AG04449 (cell line): ENCODE measurements at regions of chr18 and their contacts with region 1.

Region 1: DNA sequence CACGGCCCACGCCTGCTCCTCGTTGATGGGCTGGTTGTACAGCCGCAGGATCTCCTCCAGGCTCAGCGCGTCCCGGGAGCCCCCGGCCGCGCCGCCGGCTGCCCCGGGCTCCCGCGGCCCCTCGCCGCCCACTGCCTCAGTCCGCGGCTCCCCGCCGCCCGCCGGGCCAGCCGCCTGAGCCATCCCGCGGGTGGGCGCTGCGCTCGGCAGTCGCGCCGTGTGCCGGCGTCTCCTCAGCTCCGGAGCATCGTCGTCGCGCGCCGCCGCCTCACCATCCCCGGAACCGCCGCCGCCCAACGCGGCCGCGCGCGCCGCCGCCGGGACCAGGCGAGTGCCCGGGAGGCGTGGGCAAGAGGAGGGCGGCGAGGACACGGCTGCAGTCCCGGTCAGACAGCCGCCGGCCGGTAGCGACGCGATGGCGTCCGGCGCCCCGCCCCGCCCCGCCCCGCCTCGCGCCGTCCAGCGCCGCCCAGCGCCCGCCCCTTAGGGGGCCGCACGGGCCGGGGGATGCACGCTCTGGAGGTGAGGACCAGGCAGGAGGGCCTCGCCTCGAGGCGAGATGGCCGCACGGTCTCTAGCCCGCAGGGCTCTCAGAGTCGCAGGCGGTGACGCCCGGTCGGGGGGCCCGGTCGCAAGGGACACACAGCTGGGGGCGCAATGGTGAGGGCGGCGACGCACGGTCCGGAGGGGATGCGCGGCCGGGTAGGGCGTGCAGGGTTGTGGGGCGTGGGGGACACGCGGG is at the start of gene SPIRE1:
- DNase-seq: no peak
- H3K4me3 ChIP-seq: peak within 1 kb of the TSS; percentile 81
- CTCF ChIP-seq: no peak

Region 2: GRCh38 chr18:12397254-12397653 is 260.6 kb before region 1 on chr18:
- CTCF ChIA-PET with region 1: interaction called, 336 read pairs
- POLR2A ChIA-PET with region 1: no interaction called
- DNase-seq: no peak
- H3K4me3 ChIP-seq: no peak overlapping the region
- CTCF ChIP-seq: no peak

Region 3: DNA sequence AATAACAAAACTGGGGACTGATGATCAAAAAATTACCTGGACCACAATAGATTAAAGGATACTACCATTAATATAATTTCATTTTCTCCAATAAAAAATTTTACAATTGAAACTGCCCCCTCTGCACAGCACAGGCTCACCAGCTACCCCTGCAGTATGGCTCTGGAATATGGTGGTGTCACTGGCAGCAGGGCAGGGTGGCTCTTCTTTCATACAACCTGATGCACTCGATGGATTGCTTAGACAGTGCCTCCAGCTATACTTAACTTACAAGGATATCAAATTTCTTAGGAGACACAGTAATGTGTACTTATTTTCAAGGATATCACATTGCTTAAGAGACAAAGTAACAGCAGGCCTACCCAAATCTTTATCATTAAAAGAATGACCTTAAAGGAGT is 126.1 kb before region 1 on chr18:
- CTCF ChIA-PET with region 1: interaction called, 16 read pairs
- POLR2A ChIA-PET with region 1: no interaction called
- DNase-seq: no peak
- H3K4me3 ChIP-seq: no peak overlapping the region
- CTCF ChIP-seq: no peak

Region 4: GRCh38 chr18:12668041-12668440 is 10.2 kb after region 1 on chr18:
- CTCF ChIA-PET with region 1: interaction called, 22 read pairs
- POLR2A ChIA-PET with region 1: no interaction called
- DNase-seq: no peak
- H3K4me3 ChIP-seq: no peak overlapping the region
- CTCF ChIP-seq: no peak